Activated naive CD4-positive, alpha-beta T cell treated with anti-CD3 and anti-CD28 coated beads for 36 hours (primary cell): ENCODE measurements at regions of chr3 and their contacts with region 1.

Region 1: DNA sequence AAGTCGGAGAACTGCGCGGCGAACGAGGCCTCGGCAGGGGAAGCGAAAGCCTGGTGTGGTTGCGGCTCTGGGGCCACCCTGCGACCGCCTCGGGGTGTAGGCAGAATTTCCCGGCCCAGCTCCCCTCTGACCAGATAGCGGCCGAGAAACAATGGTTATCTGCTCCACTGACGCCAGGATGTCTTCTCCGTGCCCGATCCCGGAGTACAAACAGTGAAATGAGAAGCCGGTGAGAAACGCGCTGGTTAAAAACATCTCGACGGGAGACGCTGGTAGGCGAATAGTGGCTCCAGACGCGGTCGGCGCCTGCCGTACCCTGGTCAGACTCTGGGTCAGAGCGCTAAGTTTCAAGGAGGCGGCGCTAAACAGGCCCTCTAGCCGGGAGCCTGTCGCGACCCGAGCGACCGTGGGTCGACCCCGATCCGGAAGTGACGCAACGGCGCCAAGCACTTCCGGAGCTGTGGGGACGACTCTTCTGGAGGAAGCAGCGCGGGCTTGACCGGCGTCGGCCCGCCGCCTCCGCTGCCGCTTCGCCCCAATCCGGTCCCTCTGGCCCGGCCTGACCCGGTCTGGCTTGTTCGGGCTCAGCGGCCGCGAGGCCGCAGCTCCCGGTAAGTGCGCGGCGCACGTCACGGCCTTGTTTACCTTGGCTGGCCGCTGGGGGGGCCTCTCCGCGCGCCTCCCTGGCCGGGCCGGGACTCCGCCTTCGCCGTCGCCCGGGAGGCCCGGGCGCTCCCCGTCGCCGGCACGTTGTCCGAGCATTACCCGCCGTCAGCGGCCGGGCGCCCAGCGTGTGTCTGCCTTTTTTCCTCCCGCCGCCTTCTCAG is at the start of gene ARIH2:
- DNase-seq: peak; percentile 89
- H3K4me3 Mint-ChIP-seq: peak within 1 kb of the TSS; percentile 98
- H3K27ac Mint-ChIP-seq: peak within 1 kb of the TSS; percentile 100
- H3K4me1 Mint-ChIP-seq: peaks cover 29% of the 10 kb centered on the region
- H3K27me3 Mint-ChIP-seq: no peaks in the 10 kb centered on the region
- total RNA-seq, gene ARIH2: 96.1 to 99.1 TPM

Region 2: DNA sequence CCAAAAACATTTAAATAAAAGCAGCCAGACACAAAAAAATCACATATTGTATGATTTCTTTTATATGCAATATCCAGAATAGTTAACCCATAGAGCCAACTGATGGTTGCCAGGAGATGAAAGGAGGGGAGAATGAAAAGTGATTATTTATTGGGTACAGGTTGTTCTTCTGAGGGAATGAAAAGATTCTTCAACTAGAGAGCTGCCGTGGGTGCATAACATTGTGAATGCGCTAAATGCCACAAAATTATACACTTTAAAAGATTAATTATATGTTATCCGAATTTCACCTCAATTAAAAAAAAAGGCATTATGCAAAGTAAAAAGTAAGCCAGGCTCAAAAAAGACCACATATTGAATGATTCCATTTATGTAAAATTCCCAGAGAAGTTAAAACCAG is 107.1 kb before region 1 on chr3:
- CTCF ChIA-PET with region 1: no interaction called
- intact Hi-C with region 1: loop called (anchors 1 kb)
- DNase-seq: no peak
- H3K4me3 Mint-ChIP-seq: peak overlapping the region; percentile 38
- H3K27ac Mint-ChIP-seq: no peak overlapping the region
- H3K4me1 Mint-ChIP-seq: peaks cover 36% of the 10 kb centered on the region
- H3K27me3 Mint-ChIP-seq: no peaks in the 10 kb centered on the region

Region 3: GRCh38 chr3:48847504-48848423 is 70.8 kb before region 1 on chr3 and contains the start of gene PRKAR2A:
- CTCF ChIA-PET with region 1: no interaction called
- intact Hi-C with region 1: loop called (anchors 5 kb)
- DNase-seq: peak; percentile 81
- H3K4me3 Mint-ChIP-seq: peak within 1 kb of the TSS; percentile 84
- H3K27ac Mint-ChIP-seq: peak within 1 kb of the TSS; percentile 80
- H3K4me1 Mint-ChIP-seq: peaks cover 29% of the 10 kb centered on the region
- H3K27me3 Mint-ChIP-seq: no peaks in the 10 kb centered on the region
- total RNA-seq, gene PRKAR2A: 18.5 to 21.7 TPM